ENCODE measurements at regions of chr9 and their contacts with region 1.

Region 1: DNA sequence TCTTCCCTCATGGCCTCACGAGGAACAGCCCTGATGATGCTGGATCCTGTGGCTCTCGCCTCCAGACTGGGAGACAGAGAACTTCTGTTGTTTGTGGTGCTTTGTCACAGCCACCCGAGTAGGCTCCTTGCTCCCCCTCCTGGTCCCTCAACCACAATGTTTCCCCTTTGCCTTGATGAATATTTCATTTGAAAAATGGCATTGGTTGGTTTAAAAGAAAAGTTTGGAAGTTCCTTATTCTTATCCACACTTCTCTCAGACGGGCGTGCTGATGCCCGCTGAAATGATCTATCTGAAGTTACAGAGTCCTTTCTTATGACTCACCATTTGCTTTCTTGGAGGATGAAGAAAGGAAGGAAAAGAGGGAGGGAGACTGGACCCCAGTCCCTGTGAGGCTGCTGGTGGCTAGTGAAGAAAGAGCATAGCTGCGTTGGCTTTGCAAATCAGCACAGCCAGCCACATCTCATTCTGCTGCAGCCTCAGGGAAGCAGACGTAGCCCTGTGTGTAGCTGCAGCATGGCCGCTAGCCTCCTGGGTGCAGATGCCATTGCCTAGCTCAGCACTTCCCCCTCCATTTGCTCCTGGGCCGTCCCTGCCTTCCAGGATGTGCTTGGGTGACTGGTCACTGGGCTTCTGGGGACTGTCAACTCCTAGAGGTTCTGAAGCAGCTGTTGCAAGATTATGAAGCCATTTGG is 185.9 kb downstream of the ERCC6L2 start:
- DNase-seq: peak; percentile 59 to 78 (median 65)
- ATAC-seq: peak; percentile 87 to 88
- H3K4me3 ChIP-seq: no peak overlapping the region
- H3K27ac ChIP-seq: peak overlapping the region; percentile 20
- H3K4me1 ChIP-seq: peaks cover 3% of the 10 kb centered on the region
- H3K27me3 ChIP-seq: no peaks in the 10 kb centered on the region

Region 2: DNA sequence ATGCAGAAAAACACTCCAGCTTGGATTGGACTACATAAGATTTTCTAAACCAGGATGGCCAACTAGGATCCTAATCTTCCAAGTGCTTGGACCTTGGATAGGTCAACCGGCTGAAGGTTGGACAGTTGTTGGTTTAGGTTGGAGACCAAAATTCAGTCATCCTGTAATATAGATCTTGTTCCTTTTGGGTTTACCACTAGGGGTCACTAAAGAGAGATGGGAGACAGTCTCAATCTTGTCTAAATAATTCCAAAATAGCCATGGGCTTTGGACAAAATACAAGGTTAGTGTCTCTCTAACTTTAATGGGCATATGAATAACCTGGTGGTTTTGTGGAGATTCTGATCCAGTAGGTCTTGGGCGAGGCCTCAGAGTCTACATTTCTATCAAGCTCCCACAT is 334.7 kb before region 1 on chr9:
- intact Hi-C with region 1: loop called in 2 of 4 experiments (anchors 5 to 10 kb)
- DNase-seq: no peak
- ATAC-seq: peak; percentile 54 to 73
- H3K4me3 ChIP-seq: no peak overlapping the region
- H3K27ac ChIP-seq: no peak overlapping the region
- H3K4me1 ChIP-seq: no peaks in the 10 kb centered on the region
- H3K27me3 ChIP-seq: no peaks in the 10 kb centered on the region

Region 3: GRCh38 chr9:96116275-96117064 is 55.0 kb after region 1 on chr9:
- intact Hi-C with region 1: no loop called
- DNase-seq: peak in 2 of 3 donors; percentile 23 to 55
- ATAC-seq: peak; percentile 68 to 79
- H3K4me3 ChIP-seq: no peak overlapping the region
- H3K27ac ChIP-seq: no peak overlapping the region
- H3K4me1 ChIP-seq: no peaks in the 10 kb centered on the region
- H3K27me3 ChIP-seq: no peaks in the 10 kb centered on the region

Region 4: GRCh38 chr9:96217754-96218693 is 156.6 kb after region 1 on chr9:
- intact Hi-C with region 1: loop called in 2 of 4 experiments (anchors 10 kb)
- DNase-seq: peak; percentile 77 to 94 (median 92)
- ATAC-seq: peak; percentile 91 to 95
- H3K4me3 ChIP-seq: peak overlapping the region; percentile 4
- H3K27ac ChIP-seq: no peak overlapping the region
- H3K4me1 ChIP-seq: no peaks in the 10 kb centered on the region
- H3K27me3 ChIP-seq: no peaks in the 10 kb centered on the region